Right ventricle myocardium superior (tissue), 1 donor: ENCODE measurements at regions of chr1 and their contacts with region 1.

Region 1: GRCh38 chr1:62070384-62071011 is 124.2 kb upstream of the L1TD1 start:
- DNase-seq: no peak
- ATAC-seq: no peak

Region 2: DNA sequence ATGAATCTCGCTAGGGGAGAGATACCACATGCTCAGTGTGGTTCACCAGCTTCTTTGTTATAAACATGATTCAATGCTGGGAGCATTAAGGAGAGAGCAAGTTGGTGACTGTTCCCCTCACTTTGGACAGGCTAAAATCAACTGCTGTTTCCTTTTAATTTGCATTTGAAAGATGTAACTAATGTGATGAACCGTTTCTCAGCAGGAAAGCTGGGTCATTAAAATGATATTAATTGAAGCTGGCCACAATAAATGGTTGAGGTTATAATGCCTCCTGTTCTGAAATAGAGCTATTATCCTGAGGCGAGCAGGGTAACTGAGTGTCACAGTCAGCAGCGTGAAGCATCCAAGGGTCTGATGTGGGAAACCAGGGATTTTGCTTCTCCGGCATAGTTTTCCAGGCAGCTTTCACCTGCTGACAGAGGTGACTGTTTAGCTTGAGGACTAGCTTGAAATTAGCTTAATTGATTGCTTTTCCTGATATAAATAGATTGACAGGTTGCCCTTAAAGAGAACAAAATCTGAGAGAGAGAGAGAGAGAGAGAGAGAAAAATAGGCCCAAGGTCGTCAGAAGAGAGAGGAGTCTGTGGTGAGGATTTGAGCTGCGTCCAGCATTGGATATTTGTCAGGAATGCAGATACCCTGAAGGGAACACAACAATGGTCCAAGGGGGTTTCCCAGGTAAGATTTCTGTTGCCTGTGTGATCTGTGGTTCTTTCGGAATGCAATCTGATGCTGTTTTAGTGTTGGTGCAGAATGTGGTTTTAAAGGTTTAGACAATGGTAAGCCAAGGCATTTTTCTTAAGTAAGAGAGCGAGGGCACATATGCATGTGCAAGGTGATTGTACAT is 118.5 kb before region 1 on chr1:
- intact Hi-C with region 1: loop called (anchors 2 kb)
- DNase-seq: no peak
- ATAC-seq: peak; percentile 82